Activated naive CD4-positive, alpha-beta T cell treated with anti-CD3 and anti-CD28 coated beads for 36 hours (primary cell): ENCODE measurements at regions of chr6 and their contacts with region 1.

Region 1: GRCh38 chr6:109705258-109705657 is 14.2 kb downstream of the FIG4 start:
- DNase-seq: peak; percentile 91
- H3K4me3 Mint-ChIP-seq: no peak overlapping the region
- H3K27ac Mint-ChIP-seq: no peak overlapping the region
- H3K4me1 Mint-ChIP-seq: peaks cover 9% of the 10 kb centered on the region
- H3K27me3 Mint-ChIP-seq: no peaks in the 10 kb centered on the region

Region 2: GRCh38 chr6:109526905-109527628 is 178.2 kb before region 1 on chr6:
- CTCF ChIA-PET with region 1: no interaction called
- intact Hi-C with region 1: loop called (anchors 1 kb)
- DNase-seq: peak; percentile 70
- H3K4me3 Mint-ChIP-seq: no peak overlapping the region
- H3K27ac Mint-ChIP-seq: no peak overlapping the region
- H3K4me1 Mint-ChIP-seq: peaks cover 2% of the 10 kb centered on the region
- H3K27me3 Mint-ChIP-seq: no peaks in the 10 kb centered on the region

Region 3: DNA sequence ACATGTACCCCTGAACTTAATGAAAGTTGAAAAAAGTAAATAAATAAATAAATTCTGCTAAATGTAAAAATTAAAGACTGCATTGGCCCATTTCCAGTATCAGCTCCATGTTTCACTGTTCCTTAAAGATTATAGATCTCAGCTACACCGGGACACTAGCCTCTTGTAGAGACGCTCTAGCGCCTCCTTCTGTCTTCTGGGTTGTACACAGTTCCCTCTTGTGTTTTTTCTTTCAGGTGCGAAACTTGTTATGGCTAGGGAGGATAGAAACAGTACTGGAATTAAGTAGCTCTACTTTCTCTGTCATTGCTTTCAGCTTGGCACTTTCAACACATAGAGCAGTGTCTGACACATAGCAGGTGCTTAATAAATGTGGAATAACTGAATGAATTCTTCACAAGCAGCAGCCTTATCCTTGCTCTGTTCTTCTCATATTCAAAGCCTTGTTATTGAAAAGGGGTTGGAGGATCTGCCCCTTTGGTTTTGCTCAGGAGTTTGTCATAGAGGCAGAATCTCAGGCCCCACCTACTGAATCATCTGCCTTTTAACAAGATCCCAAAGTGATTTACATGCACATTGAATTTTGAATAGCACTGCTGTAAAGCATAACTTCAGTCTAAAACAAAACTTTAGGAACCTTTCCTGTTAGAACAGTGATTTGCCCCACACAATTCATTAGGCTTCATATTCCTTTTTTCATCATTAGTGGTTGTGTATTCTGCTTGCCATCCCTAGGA is 78.2 kb after region 1 on chr6:
- CTCF ChIA-PET with region 1: interaction called, 6 read pairs
- intact Hi-C with region 1: loop called (anchors 1 kb)
- DNase-seq: peak; percentile 14
- H3K4me3 Mint-ChIP-seq: no peak overlapping the region
- H3K27ac Mint-ChIP-seq: no peak overlapping the region
- H3K4me1 Mint-ChIP-seq: no peaks in the 10 kb centered on the region
- H3K27me3 Mint-ChIP-seq: no peaks in the 10 kb centered on the region

Region 4: GRCh38 chr6:110053395-110054240 is 348.4 kb after region 1 on chr6:
- CTCF ChIA-PET with region 1: no interaction called
- intact Hi-C with region 1: loop called (anchors 1 kb)
- DNase-seq: peak; percentile 27
- H3K4me3 Mint-ChIP-seq: no peak overlapping the region
- H3K27ac Mint-ChIP-seq: no peak overlapping the region
- H3K4me1 Mint-ChIP-seq: no peaks in the 10 kb centered on the region
- H3K27me3 Mint-ChIP-seq: peaks cover 5% of the 10 kb centered on the region

Region 5: DNA sequence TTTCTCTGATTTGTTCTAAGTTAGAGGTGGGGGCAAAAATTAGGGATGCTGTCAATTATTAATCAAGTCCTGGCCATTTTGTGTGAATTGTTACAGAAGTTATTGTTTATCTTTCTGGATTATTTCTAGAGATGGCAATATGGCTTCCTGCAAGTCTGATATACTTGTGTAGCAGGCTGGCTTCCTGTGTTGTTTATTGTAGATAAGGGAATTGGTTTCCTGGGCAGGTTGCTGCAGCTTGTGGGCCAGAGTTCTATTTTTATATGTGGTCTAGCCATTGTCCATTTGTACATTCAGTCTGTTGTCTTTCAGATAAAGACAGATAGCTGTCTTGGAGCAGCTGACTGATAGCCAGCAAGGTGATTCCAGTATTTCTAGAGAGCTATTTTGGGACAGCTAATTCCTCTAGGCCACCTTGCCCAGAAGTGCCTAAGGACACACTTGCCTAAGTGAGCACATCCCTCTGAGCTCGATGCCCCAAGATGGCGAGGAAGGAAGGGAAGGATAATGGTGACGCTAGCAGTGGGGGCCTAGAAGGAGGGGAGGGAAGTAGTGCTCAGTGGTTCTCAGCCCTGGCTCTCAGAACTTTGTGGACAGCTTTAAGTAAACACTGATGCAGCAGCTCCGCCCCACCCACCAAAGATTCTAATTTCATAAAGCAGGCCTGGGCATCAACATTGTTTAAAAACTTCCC is 684.6 kb after region 1 on chr6:
- CTCF ChIA-PET with region 1: interaction called, 8 read pairs
- intact Hi-C with region 1: loop called (anchors 1 kb)
- DNase-seq: no peak
- H3K4me3 Mint-ChIP-seq: no peak overlapping the region
- H3K27ac Mint-ChIP-seq: no peak overlapping the region
- H3K4me1 Mint-ChIP-seq: peaks cover 6% of the 10 kb centered on the region
- H3K27me3 Mint-ChIP-seq: no peaks in the 10 kb centered on the region